Activated B cell treated with CpG ODN at 0.5 μM for 24 hours (primary cell): ENCODE measurements at regions of chr7 and their contacts with region 1.

Region 1: DNA sequence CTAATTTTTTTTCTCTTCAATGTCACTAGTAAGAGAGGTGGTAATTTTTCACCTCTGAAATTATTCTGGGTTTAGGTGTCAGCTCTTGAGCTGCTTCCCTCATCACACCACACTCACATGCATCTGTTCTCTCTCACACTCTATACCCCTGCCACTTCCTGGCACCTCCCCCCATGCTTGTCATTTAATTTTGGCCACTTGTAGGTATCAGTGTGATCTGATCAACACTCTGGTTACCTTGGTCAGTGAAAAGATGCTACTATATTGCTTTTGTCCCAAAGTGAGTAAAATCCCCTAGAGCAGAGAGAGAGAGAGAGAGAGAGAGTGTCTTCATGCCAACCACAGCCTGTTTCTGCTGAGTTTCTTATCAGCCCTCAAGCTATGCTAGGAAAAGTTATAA is 42.5 kb downstream of the STK17A start:
- DNase-seq: no peak
- ATAC-seq: peak; percentile 76
- H3K4me3 Mint-ChIP-seq: peak overlapping the region; percentile 51
- H3K27ac Mint-ChIP-seq: peak overlapping the region; percentile 85
- H3K4me1 Mint-ChIP-seq: peaks cover 84% of the 10 kb centered on the region
- H3K27me3 Mint-ChIP-seq: no peaks in the 10 kb centered on the region
- CTCF ChIP-seq: no peak

Region 2: GRCh38 chr7:42107484-42108245 is 1517.8 kb before region 1 on chr7:
- CTCF ChIA-PET with region 1: no interaction called
- POLR2A ChIA-PET with region 1: no interaction called
- intact Hi-C with region 1: no loop called
- DNase-seq: no peak
- ATAC-seq: no peak
- H3K4me3 Mint-ChIP-seq: no peak overlapping the region
- H3K27ac Mint-ChIP-seq: no peak overlapping the region
- H3K4me1 Mint-ChIP-seq: no peaks in the 10 kb centered on the region
- H3K27me3 Mint-ChIP-seq: peaks cover 4% of the 10 kb centered on the region
- CTCF ChIP-seq: no peak

Region 3: GRCh38 chr7:43590862-43591550 is 34.4 kb before region 1 on chr7:
- CTCF ChIA-PET with region 1: interaction called, 8 read pairs
- POLR2A ChIA-PET with region 1: interaction called, 5 read pairs
- intact Hi-C with region 1: loop called (anchors 1 kb)
- DNase-seq: no peak
- ATAC-seq: peak; percentile 72
- H3K4me3 Mint-ChIP-seq: peak overlapping the region; percentile 50
- H3K27ac Mint-ChIP-seq: peak overlapping the region; percentile 81
- H3K4me1 Mint-ChIP-seq: peaks cover 89% of the 10 kb centered on the region
- H3K27me3 Mint-ChIP-seq: no peaks in the 10 kb centered on the region
- CTCF ChIP-seq: no peak

Region 4: DNA sequence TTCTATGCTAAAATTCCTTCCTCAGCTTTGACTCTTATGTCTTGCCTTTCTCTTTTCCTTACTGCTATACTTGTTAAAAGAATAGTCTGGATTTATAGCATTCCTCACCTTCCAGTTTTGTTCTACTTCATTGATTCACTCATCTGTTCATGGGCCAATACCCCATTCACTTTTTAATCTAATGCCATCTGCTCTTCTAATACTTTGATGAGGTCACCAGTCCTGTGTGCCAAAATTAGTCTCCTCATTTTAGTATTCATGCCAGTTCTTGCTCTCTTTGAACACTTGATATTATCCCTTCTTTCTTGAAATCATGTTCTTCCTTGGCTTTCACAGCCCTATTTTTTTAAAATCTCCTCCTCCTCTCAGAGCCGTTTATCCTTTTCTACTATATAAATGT is 23.2 kb before region 1 on chr7:
- CTCF ChIA-PET with region 1: no interaction called
- POLR2A ChIA-PET with region 1: interaction called, 13 read pairs
- intact Hi-C with region 1: loop called (anchors 2 kb)
- DNase-seq: no peak
- ATAC-seq: no peak
- H3K4me3 Mint-ChIP-seq: no peak overlapping the region
- H3K27ac Mint-ChIP-seq: no peak overlapping the region
- H3K4me1 Mint-ChIP-seq: peaks cover 38% of the 10 kb centered on the region
- H3K27me3 Mint-ChIP-seq: no peaks in the 10 kb centered on the region
- CTCF ChIP-seq: no peak

Region 5: DNA sequence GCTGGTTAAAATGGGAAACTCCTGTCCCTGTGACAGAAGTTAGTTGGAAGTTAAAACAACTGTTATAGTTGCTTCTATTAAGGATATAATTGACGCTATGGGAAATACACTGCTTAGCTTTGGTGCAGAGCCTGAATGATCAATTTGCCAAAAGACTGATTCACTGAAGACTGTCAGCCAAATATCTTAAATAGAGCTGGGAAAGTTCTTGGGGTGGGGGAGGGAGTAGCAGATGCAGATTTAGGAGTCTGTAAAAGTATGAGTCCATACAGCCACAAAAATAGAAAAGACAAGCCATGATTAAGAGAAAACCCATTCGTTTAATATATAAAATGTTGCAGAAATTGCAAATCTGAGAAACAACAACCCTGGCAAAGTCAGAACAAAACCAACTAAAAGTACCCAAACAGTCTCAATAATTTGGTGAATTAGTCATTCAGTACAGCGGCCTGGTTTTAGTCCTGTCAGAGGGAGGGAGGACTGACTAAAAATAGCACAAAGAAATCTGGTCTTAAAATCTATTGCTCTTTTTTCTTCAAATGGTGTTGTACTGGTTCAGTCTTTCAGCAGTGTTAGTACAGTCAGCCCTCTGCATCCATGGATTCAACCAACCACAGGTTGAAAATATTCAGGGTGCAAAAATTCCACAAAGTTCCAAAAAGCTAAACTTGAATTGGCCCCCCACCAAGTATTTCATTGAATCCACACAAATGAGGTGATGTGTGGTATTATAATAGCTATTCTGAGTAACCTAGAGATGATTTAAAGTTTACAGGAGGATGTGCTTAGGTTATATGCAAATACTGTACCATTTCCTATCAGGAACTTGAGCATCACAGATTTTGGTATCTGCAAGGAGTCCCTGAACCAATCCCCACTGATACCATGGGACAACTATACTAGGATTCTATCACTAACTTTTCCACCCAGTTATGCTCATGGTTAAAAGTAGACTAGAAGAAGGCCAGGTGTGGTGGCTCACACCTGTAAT is 12.6 kb before region 1 on chr7:
- CTCF ChIA-PET with region 1: no interaction called
- POLR2A ChIA-PET with region 1: no interaction called
- intact Hi-C with region 1: loop called (anchors 1 kb)
- DNase-seq: no peak
- ATAC-seq: peak; percentile 58
- H3K4me3 Mint-ChIP-seq: peak overlapping the region; percentile 49
- H3K27ac Mint-ChIP-seq: peak overlapping the region; percentile 86
- H3K4me1 Mint-ChIP-seq: peaks cover 60% of the 10 kb centered on the region
- H3K27me3 Mint-ChIP-seq: no peaks in the 10 kb centered on the region
- CTCF ChIP-seq: no peak